Transverse colon (tissue), 4 donors: ENCODE measurements at regions of chr12 and their contacts with region 1.

Region 1: DNA sequence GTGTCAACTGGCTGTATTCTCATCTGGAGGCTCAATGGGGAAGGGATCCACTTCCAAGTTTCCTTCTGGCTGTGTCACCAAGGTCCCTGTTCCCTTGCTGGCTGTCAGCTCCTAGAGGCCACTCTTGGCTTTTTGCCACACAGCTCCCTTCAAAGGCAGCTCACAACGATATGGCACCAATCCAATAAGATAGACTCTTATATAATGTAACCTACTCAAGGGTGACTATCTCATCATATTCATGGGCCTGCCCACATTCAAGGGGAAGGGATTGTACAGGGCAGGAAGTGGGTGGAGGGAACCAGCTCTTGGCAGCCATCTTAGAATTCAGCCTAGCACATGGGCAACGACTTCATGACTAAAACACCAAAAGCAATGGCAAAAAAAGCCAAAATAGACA is 98.7 kb upstream of the PLXNC1 start:
- DNase-seq: no peak
- H3K4me3 ChIP-seq: no peak overlapping the region
- H3K27ac ChIP-seq: no peak overlapping the region
- H3K4me1 ChIP-seq: peaks cover 0 to 20% (median 7%) of the 10 kb centered on the region in 4 donors
- H3K27me3 ChIP-seq: no peaks in the 10 kb centered on the region
- CTCF ChIP-seq: no peak
- EP300 ChIP-seq: no peak
- POLR2A ChIP-seq: no peak

Region 2: GRCh38 chr12:93913845-93914244 is 135.9 kb before region 1 on chr12:
- in situ Hi-C with region 1: no loop called
- intact Hi-C with region 1: loop called (anchors 5 kb)
- DNase-seq: no peak
- H3K4me3 ChIP-seq: no peak overlapping the region
- H3K27ac ChIP-seq: no peak overlapping the region
- H3K4me1 ChIP-seq: no peaks in the 10 kb centered on the region
- H3K27me3 ChIP-seq: no peaks in the 10 kb centered on the region
- CTCF ChIP-seq: no peak
- EP300 ChIP-seq: no peak
- POLR2A ChIP-seq: no peak

Region 3: DNA sequence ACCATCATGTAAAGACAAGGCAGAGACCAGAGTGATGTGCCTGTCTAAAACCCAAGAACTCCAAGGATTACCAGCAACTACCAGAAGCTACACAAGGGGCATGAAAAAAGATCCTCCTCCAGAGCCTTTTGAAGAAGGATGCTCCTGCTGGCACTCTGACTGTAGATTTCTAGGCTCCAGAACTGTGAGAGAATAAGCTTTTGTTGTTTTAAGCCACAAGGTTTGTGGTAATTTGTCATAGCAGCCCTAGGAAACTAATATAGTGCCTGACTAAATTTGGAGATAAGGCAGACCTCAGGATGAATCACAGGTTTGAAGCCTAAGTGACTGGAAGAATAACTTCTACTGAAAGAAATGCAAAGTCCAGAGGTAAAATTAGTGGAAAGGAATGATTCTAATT is 277.0 kb after region 1 on chr12:
- in situ Hi-C with region 1: no loop called
- intact Hi-C with region 1: no loop called
- DNase-seq: no peak
- H3K4me3 ChIP-seq: no peak overlapping the region
- H3K27ac ChIP-seq: no peak overlapping the region
- H3K4me1 ChIP-seq: no peaks in the 10 kb centered on the region
- H3K27me3 ChIP-seq: no peaks in the 10 kb centered on the region
- CTCF ChIP-seq: no peak
- EP300 ChIP-seq: no peak
- POLR2A ChIP-seq: no peak